ENCODE measurements at regions of chr7 and their contacts with region 1.

Region 1: DNA sequence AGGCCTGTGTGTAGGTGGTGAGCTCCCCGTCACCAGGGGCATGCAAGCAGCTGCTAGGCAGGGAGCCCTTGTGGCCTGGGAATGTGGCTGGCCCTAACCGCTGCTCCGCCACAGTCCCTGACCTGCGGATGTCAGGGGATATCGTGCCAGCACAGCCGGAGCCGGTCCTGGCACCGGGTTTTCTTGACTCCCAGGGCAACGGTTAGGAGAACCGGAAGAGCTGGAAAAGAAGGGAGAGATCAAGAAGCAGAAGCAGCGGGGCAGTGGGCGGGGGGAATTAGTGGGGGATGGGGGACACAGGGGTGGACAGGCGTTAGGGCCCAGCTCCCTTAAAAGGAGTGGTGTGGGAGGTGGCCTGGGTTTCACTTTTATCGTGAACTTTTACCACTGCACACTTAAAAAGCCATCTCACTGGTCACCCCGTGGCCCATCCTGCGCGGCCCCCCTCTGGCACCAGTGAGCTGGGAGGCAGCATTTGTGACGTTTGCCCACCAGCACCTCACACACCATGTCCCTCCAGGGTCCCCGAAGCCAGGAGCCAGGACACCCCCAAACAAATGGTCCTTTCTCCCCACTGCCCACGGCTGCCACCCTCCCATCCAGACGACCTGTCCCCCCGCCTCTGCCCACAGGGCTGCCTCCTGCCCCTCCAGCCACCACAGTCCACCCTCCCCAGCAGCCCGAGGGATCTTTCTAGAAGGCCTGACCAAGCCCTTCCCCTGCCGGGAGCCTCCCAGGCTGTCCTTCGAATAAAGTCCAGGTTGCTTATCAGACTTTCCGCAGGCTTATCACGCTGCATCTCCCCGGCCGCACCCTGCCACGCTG is 1.8 kb upstream of the MICALL2 start:
- DNase-seq: peak; percentile 70 to 93 (median 84)
- ATAC-seq: peak; percentile 47
- H3K4me3 ChIP-seq: peak overlapping the region; percentile 59
- H3K27ac ChIP-seq: peak overlapping the region; percentile 96
- H3K4me1 ChIP-seq: peaks cover 41 to 84% of the 10 kb centered on the region in 2 experiments
- H3K27me3 ChIP-seq: no peaks in the 10 kb centered on the region
- CTCF ChIP-seq: no peak
- EP300 ChIP-seq: peak; percentile 78
- POLR2A ChIP-seq: peak; percentile 85
- RAD21 ChIP-seq: no peak

Region 2: GRCh38 chr7:1418505-1419309 is 42.3 kb before region 1 on chr7:
- CTCF ChIA-PET with region 1: no interaction called
- POLR2A ChIA-PET with region 1: interaction called, 4 read pairs
- in situ Hi-C with region 1: no loop called
- intact Hi-C with region 1: loop called (anchors 5 kb)
- DNase-seq: peak; percentile 90 to 95 (median 94)
- ATAC-seq: peak; percentile 92
- H3K4me3 ChIP-seq: no peak overlapping the region
- H3K27ac ChIP-seq: no peak overlapping the region
- H3K4me1 ChIP-seq: peaks cover 21 to 40% of the 10 kb centered on the region in 2 experiments
- H3K27me3 ChIP-seq: peaks cover 0 to 14% of the 10 kb centered on the region in 2 experiments; a peak in 3 of 5 replicates
- CTCF ChIP-seq: no peak
- EP300 ChIP-seq: no peak
- POLR2A ChIP-seq: no peak
- RAD21 ChIP-seq: no peak